H1 (cell line): ENCODE measurements at regions of chr7 and their contacts with region 1.

Region 1: GRCh38 chr7:130896898-130897514 is 163.0 kb upstream of the KLF14 start:
- DNase-seq: peak in 1 of 2 experiments; percentile 80
- H3K4me3 ChIP-seq: no peak overlapping the region
- H3K27ac ChIP-seq: no peak overlapping the region
- H3K4me1 ChIP-seq: peaks cover 6 to 14% (median 8%) of the 10 kb centered on the region in 4 experiments; a peak in 6 of 7 replicates
- H3K27me3 ChIP-seq: no peaks in the 10 kb centered on the region
- CTCF ChIP-seq: peak; percentile 85 to 89 (median 86)
- EP300 ChIP-seq: no peak
- POLR2A ChIP-seq: no peak
- RAD21 ChIP-seq: peak; percentile 93 to 95

Region 2: DNA sequence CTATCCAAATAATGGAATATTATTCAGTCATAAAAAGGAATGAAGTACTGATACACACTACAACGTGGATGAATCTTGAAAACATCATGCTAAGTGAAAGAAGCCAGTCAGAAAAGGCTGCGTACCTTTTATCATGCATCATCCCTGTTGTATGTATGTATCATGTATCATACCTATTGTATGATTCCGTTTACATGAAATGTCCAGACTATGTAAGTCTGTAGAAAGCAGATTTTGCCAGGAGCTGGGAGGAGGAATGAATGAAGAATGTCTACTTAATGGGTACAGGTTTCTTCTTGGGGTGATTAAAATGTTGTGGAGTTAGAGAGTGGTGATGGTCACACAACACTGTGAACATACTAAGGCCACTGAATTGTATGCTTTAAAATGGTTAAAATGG is 27.1 kb before region 1 on chr7:
- CTCF ChIA-PET with region 1: interaction called, 64 read pairs
- POLR2A ChIA-PET with region 1: interaction called, 4 read pairs
- DNase-seq: no peak
- H3K4me3 ChIP-seq: no peak overlapping the region
- H3K27ac ChIP-seq: no peak overlapping the region
- H3K4me1 ChIP-seq: no peaks in the 10 kb centered on the region
- H3K27me3 ChIP-seq: no peaks in the 10 kb centered on the region
- CTCF ChIP-seq: no peak
- EP300 ChIP-seq: no peak
- POLR2A ChIP-seq: no peak
- RAD21 ChIP-seq: no peak

Region 3: DNA sequence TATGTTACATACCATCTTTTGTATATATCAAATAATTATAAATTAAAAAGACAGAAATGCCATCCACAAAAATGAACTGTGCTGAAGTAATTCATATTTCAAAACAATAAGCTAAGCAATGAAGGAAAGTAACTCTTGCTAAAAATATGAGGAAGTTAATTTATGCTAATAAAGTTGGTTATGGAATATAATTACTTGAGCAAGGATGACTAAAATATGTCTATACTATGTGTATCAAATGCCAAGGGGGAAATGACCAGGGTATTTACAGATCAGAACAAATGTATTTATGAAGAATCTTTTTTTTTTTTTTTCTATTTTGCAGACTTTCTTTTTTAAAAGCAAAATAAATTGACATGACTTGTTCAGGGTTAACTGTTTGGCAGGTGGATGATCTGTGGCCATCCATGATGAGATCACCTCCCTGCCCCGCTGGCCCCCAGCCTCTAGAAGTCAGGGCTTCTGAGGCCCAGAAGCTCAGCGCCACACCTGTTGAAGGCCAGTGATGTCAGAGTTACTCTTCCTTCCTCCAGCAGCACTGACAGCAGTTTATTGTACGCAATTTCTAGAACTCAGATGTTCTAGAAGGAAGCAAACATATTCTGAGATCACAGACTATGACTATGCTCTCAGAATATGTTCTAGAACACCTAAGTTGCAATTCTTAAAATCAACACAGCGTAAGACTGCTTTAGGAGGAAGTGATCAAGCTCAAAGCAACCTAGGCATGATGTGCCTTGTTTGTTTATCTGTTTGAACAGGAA is 33.1 kb after region 1 on chr7:
- CTCF ChIA-PET with region 1: interaction called, 20 read pairs
- POLR2A ChIA-PET with region 1: no interaction called
- DNase-seq: no peak
- H3K4me3 ChIP-seq: no peak overlapping the region
- H3K27ac ChIP-seq: no peak overlapping the region
- H3K4me1 ChIP-seq: peaks cover 0 to 4% (median 0%) of the 10 kb centered on the region in 4 experiments; a peak in 2 of 7 replicates
- H3K27me3 ChIP-seq: no peaks in the 10 kb centered on the region
- CTCF ChIP-seq: no peak
- EP300 ChIP-seq: no peak
- POLR2A ChIP-seq: no peak
- RAD21 ChIP-seq: no peak

Region 4: GRCh38 chr7:130982160-130982638 is 85.2 kb after region 1 on chr7:
- CTCF ChIA-PET with region 1: interaction called, 35 read pairs
- POLR2A ChIA-PET with region 1: no interaction called
- DNase-seq: no peak
- H3K4me3 ChIP-seq: no peak overlapping the region
- H3K27ac ChIP-seq: no peak overlapping the region
- H3K4me1 ChIP-seq: no peaks in the 10 kb centered on the region; a peak in 1 of 7 replicates
- H3K27me3 ChIP-seq: no peaks in the 10 kb centered on the region
- CTCF ChIP-seq: peak in 2 of 3 experiments; percentile 69 to 83; a peak in 3 of 4 replicates
- EP300 ChIP-seq: no peak
- POLR2A ChIP-seq: no peak
- RAD21 ChIP-seq: peak; percentile 78 to 79

Region 5: GRCh38 chr7:131007394-131008330 is 110.7 kb after region 1 on chr7:
- CTCF ChIA-PET with region 1: interaction called, 42 read pairs
- POLR2A ChIA-PET with region 1: interaction called, 4 read pairs
- DNase-seq: peak in 1 of 2 experiments; percentile 67
- H3K4me3 ChIP-seq: 0 out of 8 replicates have a peak overlapping the region, but pooled peaks of 1 of the 4 experiments have one; percentile 18
- H3K27ac ChIP-seq: no peak overlapping the region
- H3K4me1 ChIP-seq: peaks cover 0 to 4% (median under 1%) of the 10 kb centered on the region in 4 experiments; a peak in 6 of 7 replicates
- H3K27me3 ChIP-seq: no peaks in the 10 kb centered on the region; a peak in 1 of 7 replicates
- CTCF ChIP-seq: peak; percentile 29 to 68 (median 60)
- EP300 ChIP-seq: no peak
- POLR2A ChIP-seq: no peak
- RAD21 ChIP-seq: peak; percentile 70 to 74

Region 6: GRCh38 chr7:131068604-131069021 is 171.6 kb after region 1 on chr7:
- CTCF ChIA-PET with region 1: interaction called, 11 read pairs
- POLR2A ChIA-PET with region 1: no interaction called
- DNase-seq: no peak
- H3K4me3 ChIP-seq: no peak overlapping the region
- H3K27ac ChIP-seq: no peak overlapping the region
- H3K4me1 ChIP-seq: peaks cover 0 to 6% (median 2%) of the 10 kb centered on the region in 4 experiments; a peak in 2 of 7 replicates
- H3K27me3 ChIP-seq: no peaks in the 10 kb centered on the region
- CTCF ChIP-seq: peak in 1 of 3 experiments; percentile 15; a peak in 1 of 4 replicates
- EP300 ChIP-seq: no peak
- POLR2A ChIP-seq: no peak
- RAD21 ChIP-seq: peak in 1 of 2 experiments; percentile 23; a peak in 1 of 4 replicates